Aorta (tissue), 5 donors: ENCODE measurements at regions of chr2 and their contacts with region 1.

Region 1: DNA sequence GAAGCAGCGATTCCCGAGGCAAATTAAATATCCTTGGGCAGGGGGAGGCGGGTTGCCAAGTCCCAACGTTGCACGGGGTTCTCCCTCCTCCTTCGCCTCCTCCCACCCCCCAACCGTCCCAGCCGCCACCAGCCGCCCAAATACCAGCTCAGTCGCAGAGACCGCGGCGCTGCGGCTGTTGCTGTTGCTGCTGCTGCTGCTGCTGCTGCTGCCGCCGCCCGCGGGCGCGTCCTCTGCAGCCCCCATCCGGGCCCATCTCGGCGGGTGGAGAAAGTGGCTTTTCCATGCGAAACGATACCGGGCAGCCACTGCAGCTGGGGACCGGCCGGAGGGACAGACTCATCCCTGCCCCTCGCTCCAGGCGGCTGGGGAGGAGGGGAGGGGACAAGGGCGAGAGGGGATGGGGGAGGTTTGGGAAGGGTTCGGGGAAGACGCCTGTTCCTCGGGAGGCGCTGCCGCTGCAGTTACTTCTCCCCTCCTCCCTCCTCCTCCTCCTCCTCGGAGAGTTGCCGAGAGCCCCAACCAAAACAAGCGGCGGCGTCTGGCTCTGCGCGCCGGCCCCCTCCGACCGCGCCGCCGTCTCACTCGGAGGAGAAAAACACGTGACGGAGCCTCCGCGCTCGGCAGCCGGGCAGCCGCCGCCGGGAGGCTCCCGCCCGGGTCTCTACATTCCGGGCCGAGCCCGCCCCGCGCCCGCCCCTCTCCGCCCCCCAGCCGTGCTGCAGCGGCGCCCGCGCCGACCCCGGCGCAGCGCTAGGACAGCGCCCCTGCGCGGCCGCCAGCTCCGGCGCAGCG is at the start of gene IRS1:
- DNase-seq: peak; percentile 83 to 92
- ATAC-seq: peak; percentile 78
- H3K4me3 ChIP-seq: peak within 1 kb of the TSS; percentile 48 to 79
- H3K27ac ChIP-seq: peak within 1 kb of the TSS; percentile 78 to 87
- H3K4me1 ChIP-seq: no peaks in the 10 kb centered on the region
- H3K27me3 ChIP-seq: no peaks in the 10 kb centered on the region
- total RNA-seq, gene IRS1: 13.8 to 16.6 TPM

Region 2: DNA sequence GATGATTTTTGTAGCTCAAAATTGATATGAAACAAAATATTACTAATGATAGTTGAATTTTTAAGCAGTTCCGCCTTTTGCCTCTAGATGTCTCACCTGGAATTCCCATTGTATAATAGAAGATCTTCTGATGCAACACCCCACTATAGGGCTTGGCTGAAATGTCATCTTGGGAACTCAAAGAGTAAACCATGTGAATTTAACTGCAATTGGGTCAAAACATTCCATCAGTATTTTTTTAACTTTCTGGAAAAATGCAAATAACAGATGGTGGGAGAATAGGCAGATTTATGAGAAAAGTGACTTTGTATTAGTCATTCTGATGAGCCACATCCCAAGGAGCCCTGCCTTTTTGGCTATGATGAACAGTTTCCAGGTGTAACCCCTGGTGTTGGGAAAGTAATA is 909.9 kb before region 1 on chr2:
- intact Hi-C with region 1: loop called (anchors 2 to 5 kb)
- DNase-seq: no peak
- ATAC-seq: peak; percentile 77
- H3K4me3 ChIP-seq: no peak overlapping the region
- H3K27ac ChIP-seq: no peak overlapping the region
- H3K4me1 ChIP-seq: no peaks in the 10 kb centered on the region
- H3K27me3 ChIP-seq: no peaks in the 10 kb centered on the region

Region 3: DNA sequence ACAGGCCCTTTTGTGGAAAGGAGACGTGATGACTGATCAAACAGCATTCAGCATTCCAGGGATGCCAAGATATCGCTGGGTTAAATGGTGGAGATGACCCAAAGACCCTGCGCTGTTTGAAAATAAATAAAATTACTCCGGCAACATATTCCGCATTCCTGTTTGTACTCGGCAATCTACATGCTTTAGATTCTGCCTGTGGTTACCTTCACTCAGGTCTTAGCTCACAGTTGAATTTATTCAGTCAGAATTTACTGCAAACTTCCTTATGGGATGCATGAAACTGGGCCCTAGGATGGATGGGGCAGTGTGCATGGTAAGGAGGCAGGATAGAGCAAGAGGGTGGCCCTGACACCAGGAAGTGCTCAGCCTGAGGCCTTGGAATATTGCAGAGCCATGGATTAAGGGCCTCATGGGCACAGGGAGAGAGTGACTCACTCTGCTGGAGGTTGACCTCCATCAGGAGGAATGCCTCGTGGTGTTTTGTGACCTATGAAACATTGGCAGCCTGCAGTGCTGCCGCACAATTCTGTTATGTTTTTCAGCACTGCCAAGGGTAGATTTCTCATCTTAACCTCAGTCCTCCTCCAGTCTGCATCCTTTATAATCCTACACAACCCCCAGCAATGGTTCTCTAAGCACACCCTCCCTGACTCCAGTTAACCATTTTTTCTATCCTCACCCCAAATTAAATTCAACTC is 321.1 kb before region 1 on chr2:
- intact Hi-C with region 1: loop called (anchors 2 to 5 kb)
- DNase-seq: peak; percentile 72 to 73
- ATAC-seq: peak; percentile 91
- H3K4me3 ChIP-seq: no peak overlapping the region
- H3K27ac ChIP-seq: peak overlapping the region; percentile 74 to 96
- H3K4me1 ChIP-seq: peaks cover 1 to 3% of the 10 kb centered on the region in 2 donors
- H3K27me3 ChIP-seq: no peaks in the 10 kb centered on the region

Region 4: GRCh38 chr2:226760412-226761194 is 38.8 kb before region 1 on chr2:
- intact Hi-C with region 1: loop called (anchors 5 kb)
- DNase-seq: no peak
- ATAC-seq: no peak
- H3K4me3 ChIP-seq: no peak overlapping the region
- H3K27ac ChIP-seq: no peak overlapping the region
- H3K4me1 ChIP-seq: peaks cover 8 to 30% of the 10 kb centered on the region in 2 donors
- H3K27me3 ChIP-seq: no peaks in the 10 kb centered on the region

Region 5: GRCh38 chr2:227132986-227133385 is 333.6 kb after region 1 on chr2:
- intact Hi-C with region 1: no loop called
- DNase-seq: no peak
- ATAC-seq: no peak
- H3K4me3 ChIP-seq: no peak overlapping the region
- H3K27ac ChIP-seq: no peak overlapping the region
- H3K4me1 ChIP-seq: no peaks in the 10 kb centered on the region
- H3K27me3 ChIP-seq: no peaks in the 10 kb centered on the region